WTC11 (cell line): ENCODE measurements at regions of chr2 and their contacts with region 1.

Region 1: DNA sequence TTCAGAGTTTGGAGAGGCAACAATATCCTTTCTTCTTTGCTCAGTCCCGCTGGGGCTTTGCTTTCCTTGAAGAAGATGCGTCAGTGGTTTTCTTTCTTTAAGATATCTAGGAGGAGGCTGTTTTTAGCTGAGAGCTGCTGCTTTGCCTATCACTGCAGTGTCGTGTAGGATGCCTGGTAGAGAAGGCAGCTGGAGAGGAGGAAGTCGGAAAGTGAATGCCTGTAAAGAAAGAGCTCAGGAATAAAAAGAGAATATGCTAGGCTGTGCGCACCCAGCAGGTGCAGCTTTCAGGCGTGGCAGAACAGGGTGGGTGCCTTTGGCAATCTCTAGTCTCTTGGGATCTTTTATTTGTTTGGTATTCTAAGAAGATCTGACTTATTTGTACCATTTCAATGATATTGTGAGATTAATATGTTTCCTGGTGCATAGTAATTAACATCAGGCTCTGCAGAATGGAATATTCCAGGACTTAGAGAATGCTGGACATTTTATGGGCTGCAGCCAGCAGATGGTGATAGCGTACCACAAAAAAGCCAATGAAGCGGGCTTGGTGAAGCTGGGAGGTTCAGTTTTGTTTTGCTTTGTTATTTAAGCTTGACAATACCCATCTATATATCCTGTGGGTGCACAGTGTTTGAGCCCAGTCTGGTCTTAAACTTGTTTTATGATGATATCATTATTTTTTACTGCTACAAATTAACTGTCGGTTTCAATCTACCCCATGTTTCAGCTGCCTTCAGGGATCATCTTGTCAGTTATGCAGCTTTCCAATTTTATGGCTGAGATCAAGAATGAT is 34.9 kb downstream of the CAVIN2 start:
- DNase-seq: peak; percentile 59
- ATAC-seq: peak; percentile 84
- H3K4me3 Mint-ChIP-seq: no peak overlapping the region
- H3K27ac Mint-ChIP-seq: no peak overlapping the region
- H3K4me1 Mint-ChIP-seq: 0 out of 2 replicates have a peak, but pooled peaks cover 2% of the 10 kb centered on the region
- H3K27me3 Mint-ChIP-seq: no peaks in the 10 kb centered on the region; the same call in 1 of the 2 replicates
- CTCF ChIP-seq: peak; percentile 36

Region 2: GRCh38 chr2:191758518-191759507 is 53.2 kb before region 1 on chr2:
- CTCF ChIA-PET with region 1: interaction called, 15 read pairs
- POLR2A ChIA-PET with region 1: no interaction called
- DNase-seq: peak; percentile 66
- ATAC-seq: peak; percentile 100
- H3K4me3 Mint-ChIP-seq: no peak overlapping the region
- H3K27ac Mint-ChIP-seq: peak overlapping the region; percentile 24; the same call in 1 of the 2 replicates
- H3K4me1 Mint-ChIP-seq: peaks cover 24% of the 10 kb centered on the region
- H3K27me3 Mint-ChIP-seq: no peaks in the 10 kb centered on the region
- CTCF ChIP-seq: peak; percentile 57

Region 3: DNA sequence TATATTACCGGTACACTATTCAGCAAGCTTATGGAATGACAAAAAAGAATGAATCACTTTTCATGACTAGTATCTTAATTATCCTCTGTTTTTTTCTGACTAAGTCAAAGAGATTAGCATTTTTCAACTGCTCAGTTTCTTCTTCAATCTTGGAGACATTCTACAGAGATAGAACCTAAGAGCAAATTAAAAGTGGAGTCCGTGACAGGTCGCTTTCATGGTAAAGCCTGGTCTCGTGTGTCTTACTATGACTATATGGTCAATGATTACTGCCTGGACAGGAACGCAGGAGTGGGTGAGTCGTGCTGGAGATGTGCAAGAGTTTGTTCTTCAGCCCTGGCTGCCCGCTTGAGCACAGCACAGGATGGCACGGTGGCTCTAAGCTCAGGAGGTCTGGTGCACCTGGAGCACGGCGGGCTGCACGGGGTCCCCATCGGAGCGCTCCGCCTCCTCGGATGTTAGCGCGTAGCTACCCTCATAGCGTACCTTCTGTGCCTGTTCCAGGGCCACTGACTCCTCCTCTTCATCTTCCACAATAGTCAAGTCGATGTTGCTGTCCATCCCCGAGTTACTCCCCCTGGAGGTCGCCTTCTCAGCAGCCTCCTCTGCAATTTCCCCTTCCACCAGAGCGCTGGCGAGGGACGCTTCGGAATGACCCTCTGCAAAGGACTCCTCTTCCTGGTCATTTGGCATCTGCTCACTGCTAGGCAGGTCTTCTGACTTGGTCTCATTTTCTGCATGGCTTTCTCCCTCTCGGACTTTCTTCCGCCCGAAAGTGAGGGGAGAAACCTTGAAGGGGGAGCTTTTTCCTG is 23.7 kb after region 1 on chr2:
- CTCF ChIA-PET with region 1: interaction called, 14 read pairs
- POLR2A ChIA-PET with region 1: no interaction called
- DNase-seq: peak; percentile 58
- ATAC-seq: peak; percentile 90
- H3K4me3 Mint-ChIP-seq: no peak overlapping the region
- H3K27ac Mint-ChIP-seq: no peak overlapping the region
- H3K4me1 Mint-ChIP-seq: peaks cover 24% of the 10 kb centered on the region
- H3K27me3 Mint-ChIP-seq: no peaks in the 10 kb centered on the region
- CTCF ChIP-seq: no peak

Region 4: GRCh38 chr2:191862156-191862775 is 50.3 kb after region 1 on chr2:
- CTCF ChIA-PET with region 1: interaction called, 16 read pairs
- POLR2A ChIA-PET with region 1: no interaction called
- DNase-seq: no peak
- ATAC-seq: no peak
- H3K4me3 Mint-ChIP-seq: no peak overlapping the region
- H3K27ac Mint-ChIP-seq: no peak overlapping the region
- H3K4me1 Mint-ChIP-seq: peaks cover 22% of the 10 kb centered on the region
- H3K27me3 Mint-ChIP-seq: peaks cover 4% of the 10 kb centered on the region
- CTCF ChIP-seq: no peak